ENCODE measurements at regions of chr1 and their contacts with region 1.

Region 1: GRCh38 chr1:94805912-94806311 is 14.2 kb upstream of the SLC44A3 start:
- DNase-seq: peak; percentile 45
- ATAC-seq: no peak
- H3K4me3 ChIP-seq: no peak overlapping the region
- H3K27ac ChIP-seq: no peak overlapping the region
- H3K4me1 ChIP-seq: peaks cover 77% of the 10 kb centered on the region
- H3K27me3 ChIP-seq: no peaks in the 10 kb centered on the region
- CTCF ChIP-seq: peak; percentile 85
- EP300 ChIP-seq: no peak
- POLR2A ChIP-seq: no peak
- RAD21 ChIP-seq: peak; percentile 83

Region 2: GRCh38 chr1:94514095-94514727 is 291.7 kb before region 1 on chr1:
- CTCF ChIA-PET with region 1: interaction called, 25 read pairs
- POLR2A ChIA-PET with region 1: no interaction called
- in situ Hi-C with region 1: no loop called
- intact Hi-C with region 1: loop called (anchors 1 kb)
- DNase-seq: peak; percentile 46
- ATAC-seq: peak; percentile 92
- H3K4me3 ChIP-seq: no peak overlapping the region
- H3K27ac ChIP-seq: no peak overlapping the region
- H3K4me1 ChIP-seq: no peaks in the 10 kb centered on the region
- H3K27me3 ChIP-seq: no peaks in the 10 kb centered on the region
- CTCF ChIP-seq: peak; percentile 78
- EP300 ChIP-seq: no peak
- POLR2A ChIP-seq: no peak
- RAD21 ChIP-seq: peak; percentile 66

Region 3: GRCh38 chr1:94599095-94599813 is 206.7 kb before region 1 on chr1:
- CTCF ChIA-PET with region 1: no interaction called
- POLR2A ChIA-PET with region 1: no interaction called
- in situ Hi-C with region 1: loop called (anchors 10 kb)
- intact Hi-C with region 1: no loop called
- DNase-seq: peak; percentile 43
- ATAC-seq: peak; percentile 91
- H3K4me3 ChIP-seq: no peak overlapping the region
- H3K27ac ChIP-seq: no peak overlapping the region
- H3K4me1 ChIP-seq: peaks cover 32% of the 10 kb centered on the region
- H3K27me3 ChIP-seq: peaks cover 0 to 4% of the 10 kb centered on the region in 2 experiments; a peak in 1 of 5 replicates
- CTCF ChIP-seq: peak; percentile 67
- EP300 ChIP-seq: no peak
- POLR2A ChIP-seq: no peak
- RAD21 ChIP-seq: peak; percentile 68

Region 4: DNA sequence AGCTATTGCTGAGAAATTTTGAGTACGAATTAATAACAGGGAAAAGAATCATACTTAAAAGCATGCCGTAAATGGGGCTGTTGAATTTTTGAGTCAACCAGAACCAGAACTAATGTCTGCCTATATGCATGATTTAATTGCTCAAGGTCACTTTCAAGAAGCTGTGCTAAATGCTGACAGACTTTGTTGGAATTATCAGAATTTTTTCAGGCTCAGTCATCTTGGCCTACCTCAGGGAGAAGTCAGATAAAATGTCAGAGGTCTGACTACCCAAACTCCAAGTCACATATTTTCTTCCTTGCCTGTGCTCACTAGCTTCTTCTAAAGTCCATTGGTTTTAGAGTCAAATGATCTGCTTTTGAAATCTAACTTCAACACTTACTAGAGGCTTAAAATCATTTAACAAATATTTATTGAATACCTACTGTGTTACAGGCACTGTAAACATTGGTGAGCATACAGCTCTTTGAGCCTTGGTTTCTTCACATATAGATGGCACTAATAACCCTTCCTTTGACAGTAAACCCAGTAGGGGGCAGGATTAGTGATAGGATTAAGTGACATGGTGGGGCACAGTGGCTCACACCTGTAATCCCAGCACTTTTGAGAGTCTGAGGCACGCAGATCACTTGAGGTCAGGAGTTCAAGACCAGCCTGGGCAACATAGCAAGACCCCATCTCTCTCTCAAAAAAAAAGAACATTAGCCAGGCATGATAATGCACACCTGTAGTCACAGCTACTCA is 107.0 kb before region 1 on chr1:
- CTCF ChIA-PET with region 1: interaction called, 5 read pairs
- POLR2A ChIA-PET with region 1: interaction called, 6 read pairs
- in situ Hi-C with region 1: no loop called
- intact Hi-C with region 1: loop called (anchors 2 kb)
- DNase-seq: peak; percentile 78
- ATAC-seq: peak; percentile 87
- H3K4me3 ChIP-seq: no peak overlapping the region; a peak in 1 of 6 replicates
- H3K27ac ChIP-seq: peak overlapping the region; percentile 78
- H3K4me1 ChIP-seq: peaks cover 62% of the 10 kb centered on the region
- H3K27me3 ChIP-seq: no peaks in the 10 kb centered on the region
- CTCF ChIP-seq: peak; percentile 66
- EP300 ChIP-seq: peak; percentile 11 to 86; a peak in 2 of 4 replicates
- POLR2A ChIP-seq: no peak
- RAD21 ChIP-seq: peak; percentile 26; the same call in 1 of the 2 replicates

Region 5: GRCh38 chr1:94755675-94756074 is 50.2 kb before region 1 on chr1:
- CTCF ChIA-PET with region 1: no interaction called
- POLR2A ChIA-PET with region 1: interaction called, 4 read pairs
- in situ Hi-C with region 1: no loop called
- intact Hi-C with region 1: loop called (anchors 5 kb)
- DNase-seq: peak; percentile 81
- ATAC-seq: peak; percentile 65
- H3K4me3 ChIP-seq: no peak overlapping the region
- H3K27ac ChIP-seq: peak overlapping the region; percentile 81
- H3K4me1 ChIP-seq: peaks cover 70% of the 10 kb centered on the region
- H3K27me3 ChIP-seq: no peaks in the 10 kb centered on the region
- CTCF ChIP-seq: no peak
- EP300 ChIP-seq: peak in 1 of 2 experiments; percentile 68; a peak in 1 of 4 replicates
- POLR2A ChIP-seq: no peak
- RAD21 ChIP-seq: no peak

Region 6: DNA sequence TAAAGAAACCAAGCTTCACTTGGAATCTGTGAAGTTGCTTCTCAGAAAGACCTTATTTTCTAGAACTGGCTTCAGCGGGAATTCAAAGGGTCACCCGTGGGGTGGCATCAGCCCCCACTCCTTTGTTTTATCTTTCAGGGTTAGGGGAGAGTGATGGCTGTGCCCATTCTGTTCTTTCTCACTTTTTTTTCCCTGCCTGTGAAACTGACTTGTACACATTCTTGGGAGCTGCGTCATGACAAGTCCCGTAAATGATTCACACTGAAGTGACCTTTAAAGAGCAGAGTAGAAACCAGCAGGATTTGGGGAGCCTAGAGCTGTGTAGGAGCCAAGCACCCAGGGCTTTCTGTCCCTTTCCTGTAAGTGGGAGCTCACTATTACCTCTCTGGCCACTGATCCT is 58.0 kb after region 1 on chr1:
- CTCF ChIA-PET with region 1: no interaction called
- POLR2A ChIA-PET with region 1: no interaction called
- in situ Hi-C with region 1: no loop called
- intact Hi-C with region 1: no loop called
- DNase-seq: peak; percentile 56
- ATAC-seq: peak; percentile 93
- H3K4me3 ChIP-seq: no peak overlapping the region
- H3K27ac ChIP-seq: no peak overlapping the region
- H3K4me1 ChIP-seq: peaks cover 37% of the 10 kb centered on the region
- H3K27me3 ChIP-seq: no peaks in the 10 kb centered on the region
- CTCF ChIP-seq: no peak
- EP300 ChIP-seq: no peak
- POLR2A ChIP-seq: no peak
- RAD21 ChIP-seq: no peak

Measured in HepG2 (cell line).